ENCODE measurements at regions of chr19 and their contacts with region 1.

Region 1: DNA sequence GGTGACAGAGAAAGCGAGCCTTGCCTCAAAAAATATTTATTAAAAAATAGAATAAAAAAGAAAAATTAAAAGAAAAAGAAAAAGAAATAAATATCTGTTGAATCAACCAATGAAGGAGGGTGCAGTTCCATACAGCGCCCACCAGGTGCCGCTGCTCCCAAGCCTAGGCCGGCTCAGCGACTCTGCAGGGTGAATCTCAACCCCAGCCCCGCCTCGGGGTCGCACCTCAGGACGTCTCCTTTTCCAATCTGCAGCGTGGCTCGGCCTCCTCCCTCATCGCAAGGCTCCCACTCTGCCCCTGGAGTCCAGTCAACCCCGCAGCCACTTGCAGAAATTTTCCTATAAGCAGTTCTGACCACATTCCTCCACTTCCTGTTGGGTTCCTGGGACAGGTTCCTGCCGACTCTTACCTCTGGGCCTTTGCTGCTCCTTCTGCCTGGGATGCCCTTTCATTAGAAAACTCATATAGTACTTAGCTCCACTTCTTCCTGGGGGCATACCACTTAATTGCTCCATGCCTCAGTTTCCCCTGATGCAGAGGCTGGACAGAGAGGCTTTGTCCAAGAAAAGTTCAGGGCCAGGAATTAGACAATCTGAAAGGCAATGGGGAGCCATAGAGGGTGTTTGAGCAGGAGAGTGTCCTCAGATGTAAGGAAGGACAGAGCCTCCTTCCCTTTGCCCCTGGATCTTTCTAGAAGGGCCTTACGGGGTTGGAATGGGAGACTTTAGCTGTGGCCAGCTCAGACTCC is 24.3 kb downstream of the NFILZ start:
- DNase-seq: peak; percentile 69
- ATAC-seq: peak; percentile 75

Region 2: GRCh38 chr19:9078651-9079050 is 423.9 kb after region 1 on chr19:
- intact Hi-C with region 1: loop called (anchors 2 kb)
- DNase-seq: no peak
- ATAC-seq: no peak

Measured in Right ventricle myocardium superior (tissue), 1 donor.